Naive thymus-derived CD4-positive, alpha-beta T cell (primary cell): ENCODE measurements at regions of chr5 and their contacts with region 1.

Region 1: GRCh38 chr5:55763746-55764420 is 26.0 kb downstream of the DDX4 start:
- DNase-seq: peak in 4 of 9 donors; percentile 2 to 14 (median 8)
- ATAC-seq: peak; percentile 27
- H3K4me3 ChIP-seq: no peak overlapping the region
- H3K4me3 Mint-ChIP-seq: peak overlapping the region in 9 of 10 donors; percentile 1 to 60 (median 15)
- H3K27ac ChIP-seq: no peak overlapping the region
- H3K27ac Mint-ChIP-seq: peak overlapping the region in 1 of 9 donors; percentile 76
- H3K4me1 ChIP-seq: peaks cover 5 to 10% of the 10 kb centered on the region in 2 donors
- H3K4me1 Mint-ChIP-seq: peaks cover 9 to 38% (median 18%) of the 10 kb centered on the region in 7 donors
- H3K27me3 ChIP-seq: peaks cover 0 to 5% of the 10 kb centered on the region in 2 donors
- H3K27me3 Mint-ChIP-seq: peaks cover 4 to 18% (median 10%) of the 10 kb centered on the region in 5 donors

Region 2: GRCh38 chr5:55680353-55680752 is 83.5 kb before region 1 on chr5:
- CTCF ChIA-PET with region 1: no interaction called
- POLR2A ChIA-PET with region 1: no interaction called
- intact Hi-C with region 1: no loop called
- DNase-seq: no peak
- ATAC-seq: no peak
- H3K4me3 ChIP-seq: no peak overlapping the region
- H3K4me3 Mint-ChIP-seq: no peak overlapping the region
- H3K27ac ChIP-seq: no peak overlapping the region
- H3K27ac Mint-ChIP-seq: no peak overlapping the region
- H3K4me1 ChIP-seq: no peaks in the 10 kb centered on the region
- H3K4me1 Mint-ChIP-seq: peaks cover 0 to 10% (median 8%) of the 10 kb centered on the region in 7 donors
- H3K27me3 ChIP-seq: no peaks in the 10 kb centered on the region
- H3K27me3 Mint-ChIP-seq: no peaks in the 10 kb centered on the region

Region 3: GRCh38 chr5:55711968-55712859 is 51.7 kb before region 1 on chr5 and contains the start of gene SLC38A9:
- CTCF ChIA-PET with region 1: no interaction called
- POLR2A ChIA-PET with region 1: no interaction called
- intact Hi-C with region 1: loop called in 1 of 2 experiments (anchors 2 kb)
- DNase-seq: peak; percentile 82 to 91 (median 90)
- ATAC-seq: peak; percentile 100
- H3K4me3 ChIP-seq: peak within 1 kb of the TSS; percentile 87
- H3K4me3 Mint-ChIP-seq: peak within 1 kb of the TSS; percentile 94 to 99 (median 98)
- H3K27ac ChIP-seq: peak within 1 kb of the TSS; percentile 72
- H3K27ac Mint-ChIP-seq: peak within 1 kb of the TSS; percentile 76 to 97 (median 91)
- H3K4me1 ChIP-seq: peaks cover 12 to 16% of the 10 kb centered on the region in 2 donors
- H3K4me1 Mint-ChIP-seq: peaks cover 20 to 40% (median 29%) of the 10 kb centered on the region in 7 donors
- H3K27me3 ChIP-seq: no peaks in the 10 kb centered on the region
- H3K27me3 Mint-ChIP-seq: peaks cover 0 to 3% (median 0%) of the 10 kb centered on the region in 5 donors
- total RNA-seq, gene SLC38A9: 17.7 to 32.6 (median 30.4) TPM

Region 4: GRCh38 chr5:55903121-55903701 is 139.3 kb after region 1 on chr5:
- CTCF ChIA-PET with region 1: no interaction called
- POLR2A ChIA-PET with region 1: no interaction called
- intact Hi-C with region 1: loop called in 1 of 2 experiments (anchors 5 kb)
- DNase-seq: peak in 3 of 9 donors; percentile 13 to 82 (median 24)
- ATAC-seq: peak; percentile 94
- H3K4me3 ChIP-seq: no peak overlapping the region
- H3K4me3 Mint-ChIP-seq: peak overlapping the region in 6 of 10 donors; percentile 30 to 74 (median 40)
- H3K27ac ChIP-seq: no peak overlapping the region
- H3K27ac Mint-ChIP-seq: peak overlapping the region in 2 of 9 donors; percentile 41 to 74
- H3K4me1 ChIP-seq: peaks cover 7% of the 10 kb centered on the region in 2 donors
- H3K4me1 Mint-ChIP-seq: peaks cover 11 to 52% (median 15%) of the 10 kb centered on the region in 7 donors
- H3K27me3 ChIP-seq: no peaks in the 10 kb centered on the region
- H3K27me3 Mint-ChIP-seq: peaks cover 0 to 3% (median 0%) of the 10 kb centered on the region in 5 donors